Heart left ventricle (tissue), 16 donors: ENCODE measurements at regions of chr12 and their contacts with region 1.

Region 1: GRCh38 chr12:20369305-20370005 is 1.1 kb downstream of the PDE3A start:
- DNase-seq: peak; percentile 82 to 92 (median 90)
- ATAC-seq: peak; percentile 67 to 88 (median 82)
- H3K4me3 ChIP-seq: peak overlapping the region; percentile 62 to 88 (median 76)
- H3K27ac ChIP-seq: peak overlapping the region; percentile 88 to 98 (median 96)
- H3K4me1 ChIP-seq: peaks cover 0 to 16% (median 4%) of the 10 kb centered on the region in 12 donors
- H3K27me3 ChIP-seq: peaks cover 0 to 16% (median 0%) of the 10 kb centered on the region in 9 donors
- CTCF ChIP-seq: peak in 8 of 12 donors; percentile 22 to 52 (median 37)
- POLR2A ChIP-seq: peak in 1 of 2 donors; percentile 91

Region 2: GRCh38 chr12:19757317-19757877 is 612.1 kb before region 1 on chr12:
- intact Hi-C with region 1: loop called in 4 of 10 experiments (anchors 5 to 10 kb)
- DNase-seq: no peak
- ATAC-seq: peak in 2 of 4 donors; percentile 55 to 63
- H3K4me3 ChIP-seq: no peak overlapping the region
- H3K27ac ChIP-seq: peak overlapping the region in 6 of 12 donors; percentile 7 to 49 (median 40)
- H3K4me1 ChIP-seq: peaks cover 0 to 12% (median 0%) of the 10 kb centered on the region in 12 donors
- H3K27me3 ChIP-seq: no peaks in the 10 kb centered on the region
- CTCF ChIP-seq: peak; percentile 43 to 83 (median 66)
- POLR2A ChIP-seq: no peak

Region 3: GRCh38 chr12:19994970-19995369 is 374.5 kb before region 1 on chr12:
- intact Hi-C with region 1: loop called in 4 of 10 experiments (anchors 5 to 10 kb)
- DNase-seq: no peak
- ATAC-seq: no peak
- H3K4me3 ChIP-seq: no peak overlapping the region
- H3K27ac ChIP-seq: no peak overlapping the region
- H3K4me1 ChIP-seq: peaks cover 0 to 8% (median 0%) of the 10 kb centered on the region in 12 donors
- H3K27me3 ChIP-seq: no peaks in the 10 kb centered on the region
- CTCF ChIP-seq: peak in 9 of 12 donors; percentile 20 to 52 (median 32)
- POLR2A ChIP-seq: no peak

Region 4: DNA sequence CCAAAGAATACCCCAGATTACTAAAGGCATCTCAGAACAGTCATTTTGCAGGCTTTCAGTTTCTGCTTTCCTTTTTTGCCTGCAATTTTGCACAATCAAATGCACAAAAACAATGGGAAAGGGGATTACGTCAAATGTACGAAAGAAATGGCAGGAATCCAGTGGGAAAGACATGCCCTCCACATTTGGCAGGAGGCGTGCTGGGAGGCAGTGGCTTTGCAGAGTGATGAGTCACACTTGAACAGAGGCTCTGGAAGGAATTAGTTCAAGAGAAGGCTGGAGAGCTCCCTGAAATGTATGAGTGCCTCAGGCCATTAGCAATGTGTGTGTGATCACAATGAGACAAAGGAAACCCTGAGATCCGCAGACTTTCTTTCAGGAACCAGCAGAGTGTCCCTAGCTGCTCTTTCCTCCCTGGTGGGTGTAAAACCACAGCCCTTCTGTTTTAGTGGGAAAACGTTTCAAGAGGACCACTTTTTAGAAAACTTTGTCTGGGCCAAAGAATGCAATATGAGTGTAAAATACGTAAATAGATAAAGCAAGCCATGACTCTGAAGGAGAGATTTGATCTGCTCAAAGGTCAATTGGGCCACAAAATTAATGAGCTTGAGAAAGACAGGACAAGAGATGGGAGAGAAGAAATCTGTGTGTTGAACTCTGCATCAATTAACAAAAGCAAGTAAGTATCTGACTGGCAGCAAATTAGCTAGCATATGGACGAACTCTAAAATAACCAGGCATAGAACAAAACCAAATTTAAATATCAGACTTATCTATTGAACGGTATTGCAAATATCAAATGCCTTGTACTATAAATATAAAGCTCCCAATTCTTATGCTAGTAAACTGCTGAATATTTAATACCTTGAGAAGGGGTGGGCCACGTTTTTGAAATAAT is 156.5 kb before region 1 on chr12:
- intact Hi-C with region 1: loop called in 5 of 10 experiments (anchors 5 kb)
- DNase-seq: peak; percentile 83 to 91 (median 86)
- ATAC-seq: peak; percentile 97 to 99 (median 99)
- H3K4me3 ChIP-seq: peak overlapping the region in 8 of 12 donors; percentile 25 to 37 (median 28)
- H3K27ac ChIP-seq: peak overlapping the region; percentile 53 to 87 (median 83)
- H3K4me1 ChIP-seq: peaks cover 0 to 60% (median 25%) of the 10 kb centered on the region in 12 donors
- H3K27me3 ChIP-seq: no peaks in the 10 kb centered on the region
- CTCF ChIP-seq: peak in 1 of 12 donors; percentile 4
- POLR2A ChIP-seq: no peak

Region 5: DNA sequence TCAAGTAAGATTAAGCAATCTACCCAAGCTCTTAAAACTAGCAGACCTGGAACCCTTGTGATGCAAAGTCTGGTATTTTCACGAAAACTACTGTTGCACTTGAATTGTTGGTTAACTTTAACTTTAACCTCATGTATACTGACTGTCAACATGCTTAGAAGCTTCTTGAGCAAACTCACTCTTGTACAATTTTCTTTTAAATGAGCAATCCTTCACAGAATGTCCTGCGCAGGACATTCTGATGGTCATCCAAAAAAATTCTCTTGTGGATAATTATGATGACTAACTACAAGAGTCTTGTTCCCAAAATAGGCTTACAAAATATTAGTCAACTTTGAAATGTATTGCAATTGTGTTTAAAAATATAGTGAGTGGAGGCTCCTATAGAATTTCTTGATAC is 55.1 kb before region 1 on chr12:
- intact Hi-C with region 1: loop called in 3 of 10 experiments (anchors 5 to 10 kb)
- DNase-seq: no peak
- ATAC-seq: peak; percentile 19 to 69 (median 48)
- H3K4me3 ChIP-seq: no peak overlapping the region
- H3K27ac ChIP-seq: peak overlapping the region in 2 of 12 donors; percentile 23
- H3K4me1 ChIP-seq: peaks cover 0 to 19% (median 0%) of the 10 kb centered on the region in 12 donors
- H3K27me3 ChIP-seq: no peaks in the 10 kb centered on the region
- CTCF ChIP-seq: no peak
- POLR2A ChIP-seq: no peak

Region 6: DNA sequence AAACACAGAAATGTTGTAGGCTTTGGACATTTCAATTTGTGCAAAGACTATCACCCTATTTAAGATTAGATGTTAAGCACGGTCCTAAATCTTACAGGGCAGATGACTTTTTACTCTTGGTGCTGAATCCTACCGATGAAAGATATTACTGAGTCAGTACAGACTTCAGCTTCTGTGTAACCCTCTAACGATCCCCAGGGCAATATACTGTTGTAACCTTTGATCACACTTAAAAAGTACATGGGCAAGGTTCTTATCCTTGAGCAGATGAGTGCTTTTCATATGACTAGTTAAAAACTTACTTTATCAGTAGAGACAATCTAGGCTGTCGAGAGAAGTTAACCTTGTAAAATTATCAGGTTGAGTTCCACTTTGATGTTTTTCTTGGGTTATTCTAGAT is 21.4 kb after region 1 on chr12:
- intact Hi-C with region 1: no loop called
- DNase-seq: no peak
- ATAC-seq: peak in 3 of 4 donors; percentile 22 to 38 (median 38)
- H3K4me3 ChIP-seq: peak overlapping the region in 4 of 12 donors; percentile 4 to 19 (median 8)
- H3K27ac ChIP-seq: peak overlapping the region in 11 of 12 donors; percentile 4 to 81 (median 63)
- H3K4me1 ChIP-seq: peaks cover 0 to 54% (median 20%) of the 10 kb centered on the region in 12 donors
- H3K27me3 ChIP-seq: no peaks in the 10 kb centered on the region
- CTCF ChIP-seq: no peak
- POLR2A ChIP-seq: no peak

Region 7: GRCh38 chr12:20421421-20421820 is 52.0 kb after region 1 on chr12:
- intact Hi-C with region 1: loop called in 1 of 10 experiments (anchors 5 kb)
- DNase-seq: peak in 1 of 5 donors; percentile 51
- ATAC-seq: peak; percentile 54 to 70 (median 56)
- H3K4me3 ChIP-seq: no peak overlapping the region
- H3K27ac ChIP-seq: peak overlapping the region in 10 of 12 donors; percentile 8 to 63 (median 43)
- H3K4me1 ChIP-seq: peaks cover 0 to 82% (median 24%) of the 10 kb centered on the region in 12 donors
- H3K27me3 ChIP-seq: no peaks in the 10 kb centered on the region
- CTCF ChIP-seq: no peak
- POLR2A ChIP-seq: no peak

Region 8: DNA sequence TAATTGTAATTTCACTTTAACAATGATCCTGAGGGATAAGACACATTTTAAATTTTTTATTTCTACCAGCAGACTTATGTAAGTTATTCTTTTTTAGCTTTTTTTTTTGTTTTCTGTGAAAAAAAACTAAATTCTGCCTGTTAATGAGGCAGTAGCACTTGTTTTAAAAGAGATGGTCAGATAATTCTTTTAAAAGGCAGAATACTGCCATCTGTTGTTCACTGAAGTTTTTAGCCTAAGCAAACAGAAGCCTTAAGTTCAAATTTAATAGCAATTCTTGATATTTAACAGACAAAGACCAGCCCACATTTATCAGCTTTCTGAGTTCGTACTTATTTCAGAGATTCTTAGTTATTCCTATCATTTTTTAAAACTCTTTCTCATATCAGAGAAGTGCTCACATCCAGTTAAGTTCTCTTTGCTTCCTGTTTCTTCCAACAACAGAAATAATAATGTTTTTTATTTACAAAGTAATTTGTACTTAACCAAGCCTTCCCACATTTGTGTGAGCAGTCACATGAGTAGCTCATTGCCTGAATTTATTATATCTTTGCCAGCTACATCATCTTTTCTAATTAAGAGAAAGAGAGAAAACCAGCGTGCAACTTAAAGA is 232.3 kb after region 1 on chr12:
- intact Hi-C with region 1: loop called in 4 of 10 experiments (anchors 5 to 10 kb)
- DNase-seq: no peak
- ATAC-seq: no peak
- H3K4me3 ChIP-seq: no peak overlapping the region
- H3K27ac ChIP-seq: peak overlapping the region in 11 of 12 donors; percentile 15 to 70 (median 61)
- H3K4me1 ChIP-seq: peaks cover 0 to 46% (median 16%) of the 10 kb centered on the region in 12 donors
- H3K27me3 ChIP-seq: no peaks in the 10 kb centered on the region
- CTCF ChIP-seq: peak; percentile 11 to 65 (median 46)
- POLR2A ChIP-seq: no peak